Activated B cell treated with CpG ODN at 0.5 μM for 24 hours (primary cell): ENCODE measurements at regions of chr12 and their contacts with region 1.

Region 1: GRCh38 chr12:54017878-54018467 is 9.2 kb downstream of the HOXC8 start:
- DNase-seq: peak; percentile 67
- ATAC-seq: peak; percentile 88
- H3K4me3 Mint-ChIP-seq: peak overlapping the region; percentile 84
- H3K27ac Mint-ChIP-seq: peak overlapping the region; percentile 72
- H3K4me1 Mint-ChIP-seq: peaks cover 29% of the 10 kb centered on the region
- H3K27me3 Mint-ChIP-seq: peaks cover 64% of the 10 kb centered on the region
- CTCF ChIP-seq: no peak

Region 2: GRCh38 chr12:53907103-53907502 is 110.9 kb before region 1 on chr12:
- CTCF ChIA-PET with region 1: no interaction called
- POLR2A ChIA-PET with region 1: interaction called, 12 read pairs
- intact Hi-C with region 1: no loop called
- DNase-seq: no peak
- ATAC-seq: no peak
- H3K4me3 Mint-ChIP-seq: no peak overlapping the region
- H3K27ac Mint-ChIP-seq: no peak overlapping the region
- H3K4me1 Mint-ChIP-seq: no peaks in the 10 kb centered on the region
- H3K27me3 Mint-ChIP-seq: peaks cover 11% of the 10 kb centered on the region
- CTCF ChIP-seq: no peak

Region 3: GRCh38 chr12:54368709-54369583 is 351.0 kb after region 1 on chr12:
- CTCF ChIA-PET with region 1: no interaction called
- POLR2A ChIA-PET with region 1: no interaction called
- intact Hi-C with region 1: no loop called
- DNase-seq: peak; percentile 78
- ATAC-seq: peak; percentile 95
- H3K4me3 Mint-ChIP-seq: peak overlapping the region; percentile 55
- H3K27ac Mint-ChIP-seq: no peak overlapping the region
- H3K4me1 Mint-ChIP-seq: peaks cover 22% of the 10 kb centered on the region
- H3K27me3 Mint-ChIP-seq: no peaks in the 10 kb centered on the region
- CTCF ChIP-seq: peak; percentile 60